ENCODE measurements at regions of chr7 and their contacts with region 1.

Region 1: DNA sequence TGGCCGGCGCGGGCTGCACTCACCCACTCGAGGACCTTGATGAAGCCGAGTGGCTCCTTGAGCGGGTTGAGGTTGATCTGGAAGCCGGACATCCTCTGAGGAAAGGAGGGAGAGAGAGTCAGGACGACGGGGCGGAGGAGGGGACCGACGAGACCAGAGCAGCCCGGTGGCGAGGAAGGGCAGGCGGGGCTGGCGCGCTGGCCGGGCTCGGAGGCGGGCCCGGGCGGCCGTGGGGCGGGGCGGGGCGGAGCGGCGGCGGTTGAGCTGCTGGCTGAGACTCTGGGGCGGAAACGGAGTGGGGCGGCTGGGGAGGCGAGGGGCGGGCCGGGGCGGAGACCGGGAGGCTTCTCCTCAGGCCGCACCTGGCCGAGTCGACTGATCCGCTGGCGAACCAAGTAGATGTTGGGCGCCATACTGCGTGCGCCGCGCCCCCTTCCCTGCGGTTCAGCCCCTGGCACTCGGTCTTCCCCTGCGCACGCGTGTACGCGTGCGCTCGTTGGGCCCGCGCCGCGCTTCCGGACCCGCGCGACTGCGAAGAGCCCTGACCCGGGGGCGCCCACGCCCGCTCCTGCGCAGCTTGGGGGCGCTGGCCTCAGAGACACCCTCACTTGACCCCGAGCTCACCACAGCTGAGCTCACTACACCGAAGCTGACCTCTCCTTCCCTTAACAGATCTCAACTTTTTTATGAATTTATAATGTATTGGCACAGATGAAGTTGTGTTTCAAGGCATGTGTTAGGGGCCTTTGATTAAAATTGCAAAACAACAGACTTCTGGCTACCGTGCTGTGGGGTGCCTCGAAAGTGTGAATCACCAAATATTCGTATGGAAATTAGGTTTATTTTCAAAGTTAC is at the start of gene SYPL1:
- DNase-seq: peak; percentile 96
- ATAC-seq: peak; percentile 87
- H3K4me3 Mint-ChIP-seq: peak within 1 kb of the TSS; percentile 89
- H3K27ac Mint-ChIP-seq: peak within 1 kb of the TSS; percentile 83
- H3K4me1 Mint-ChIP-seq: peaks cover 41% of the 10 kb centered on the region
- H3K27me3 Mint-ChIP-seq: no peaks in the 10 kb centered on the region
- total RNA-seq, gene SYPL1: 52.2 to 56.5 TPM

Region 2: DNA sequence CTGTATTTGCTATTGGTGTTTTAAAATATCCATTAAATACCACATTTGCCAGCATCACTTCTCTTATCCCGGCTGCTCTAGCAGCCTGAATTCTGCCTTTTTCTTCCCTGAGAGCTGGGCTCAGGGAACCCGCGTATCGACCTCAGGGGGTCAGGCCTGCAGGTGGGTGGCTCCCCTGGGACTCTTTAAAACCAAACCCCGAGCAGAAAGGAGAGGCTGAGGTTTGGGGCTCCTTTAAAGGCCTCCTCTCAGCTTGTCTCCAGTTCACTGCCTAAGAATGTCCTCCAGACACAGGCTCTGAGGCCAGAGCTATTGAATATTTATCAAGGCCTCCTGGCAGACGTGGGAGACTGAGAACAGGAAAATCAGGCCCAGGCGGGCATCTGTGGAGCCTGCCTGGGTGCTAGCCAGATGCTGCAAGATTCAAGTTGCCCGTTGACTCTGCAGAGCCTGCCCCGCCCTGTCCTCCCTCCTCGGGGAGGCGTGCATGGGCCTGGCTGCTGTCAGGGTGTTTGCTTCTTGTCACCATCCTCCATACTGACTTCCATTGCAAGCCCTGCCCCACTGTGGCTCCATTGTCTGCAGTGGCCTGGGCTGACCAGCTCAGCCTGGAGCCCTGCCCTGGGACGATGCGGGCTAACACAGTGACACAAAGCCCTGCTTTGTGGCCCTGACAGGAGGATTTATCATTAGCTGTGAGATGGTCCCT is 54.0 kb before region 1 on chr7:
- POLR2A ChIA-PET with region 1: interaction called, 11 read pairs
- DNase-seq: no peak
- ATAC-seq: no peak
- H3K4me3 Mint-ChIP-seq: no peak overlapping the region
- H3K27ac Mint-ChIP-seq: peak overlapping the region; percentile 20
- H3K4me1 Mint-ChIP-seq: peaks cover 38% of the 10 kb centered on the region
- H3K27me3 Mint-ChIP-seq: peaks cover 5% of the 10 kb centered on the region

Region 3: GRCh38 chr7:106071356-106071998 is 40.9 kb before region 1 on chr7:
- POLR2A ChIA-PET with region 1: interaction called, 98 read pairs
- DNase-seq: peak; percentile 73
- ATAC-seq: peak; percentile 98
- H3K4me3 Mint-ChIP-seq: peak overlapping the region; percentile 85
- H3K27ac Mint-ChIP-seq: peak overlapping the region; percentile 98
- H3K4me1 Mint-ChIP-seq: peaks cover 45% of the 10 kb centered on the region
- H3K27me3 Mint-ChIP-seq: no peaks in the 10 kb centered on the region

Region 4: DNA sequence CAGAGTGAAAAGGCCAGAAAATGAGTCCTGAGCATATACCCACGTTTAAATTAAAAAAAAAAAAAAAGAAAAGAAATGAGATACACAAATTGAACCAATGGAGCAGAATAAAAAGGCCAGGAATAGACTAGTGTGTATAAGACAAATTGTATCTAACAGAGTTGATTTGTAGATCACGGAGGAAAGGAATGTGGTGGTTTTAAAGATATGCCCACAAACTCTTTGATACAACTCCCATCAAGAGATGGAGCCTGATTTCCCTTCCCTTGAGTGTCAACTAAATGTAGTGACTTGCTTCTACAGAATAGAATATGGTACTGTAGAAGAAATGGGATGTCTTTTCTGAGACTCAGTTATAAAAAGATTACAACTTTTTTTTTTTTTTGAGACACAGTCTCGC is 10.6 kb before region 1 on chr7:
- POLR2A ChIA-PET with region 1: interaction called, 21 read pairs
- DNase-seq: no peak
- ATAC-seq: no peak
- H3K4me3 Mint-ChIP-seq: no peak overlapping the region
- H3K27ac Mint-ChIP-seq: no peak overlapping the region
- H3K4me1 Mint-ChIP-seq: peaks cover 33% of the 10 kb centered on the region
- H3K27me3 Mint-ChIP-seq: no peaks in the 10 kb centered on the region

Region 5: DNA sequence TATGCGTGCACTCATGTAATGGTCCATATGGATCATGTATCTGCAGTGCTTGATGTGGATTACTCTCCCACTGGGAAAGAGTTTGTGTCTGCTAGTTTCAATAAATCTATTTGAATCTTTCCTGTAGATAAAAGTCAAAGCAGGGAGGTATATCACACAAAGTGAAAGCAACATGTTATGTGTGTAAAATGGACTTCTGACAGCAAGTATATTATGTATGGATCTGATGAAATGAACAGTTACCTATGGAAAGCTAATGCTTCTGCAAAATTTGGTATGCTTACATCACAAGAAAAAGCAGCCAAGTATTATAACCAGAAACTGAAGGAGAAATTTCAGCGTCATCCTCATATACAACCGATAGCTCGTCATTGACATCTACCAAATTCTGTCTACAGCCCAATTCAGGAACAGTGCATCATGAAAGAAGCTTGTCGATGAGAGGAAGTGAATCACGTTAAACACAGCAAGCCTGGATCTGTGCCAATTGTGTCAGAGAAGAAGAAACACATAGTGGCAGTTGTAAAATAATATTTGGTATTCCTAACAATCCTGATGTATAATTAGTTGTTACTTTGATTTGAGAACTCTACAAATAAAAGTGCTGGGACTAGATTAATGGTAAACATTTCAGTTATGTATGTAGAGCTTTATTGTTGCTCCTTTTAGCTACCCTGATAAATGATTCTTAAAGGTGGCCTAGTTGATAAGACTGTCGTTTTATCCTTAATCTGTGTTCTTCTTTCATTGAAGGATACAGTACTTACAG is 14.0 kb after region 1 on chr7:
- POLR2A ChIA-PET with region 1: interaction called, 18 read pairs
- DNase-seq: no peak
- ATAC-seq: peak; percentile 68
- H3K4me3 Mint-ChIP-seq: peak overlapping the region; percentile 62
- H3K27ac Mint-ChIP-seq: peak overlapping the region; percentile 13
- H3K4me1 Mint-ChIP-seq: peaks cover 10% of the 10 kb centered on the region
- H3K27me3 Mint-ChIP-seq: no peaks in the 10 kb centered on the region

Region 6: GRCh38 chr7:106285051-106285854 is 172.9 kb after region 1 on chr7:
- POLR2A ChIA-PET with region 1: interaction called, 10 read pairs
- DNase-seq: peak; percentile 93
- ATAC-seq: peak; percentile 89
- H3K4me3 Mint-ChIP-seq: peak overlapping the region; percentile 99
- H3K27ac Mint-ChIP-seq: peak overlapping the region; percentile 99
- H3K4me1 Mint-ChIP-seq: peaks cover 31% of the 10 kb centered on the region
- H3K27me3 Mint-ChIP-seq: no peaks in the 10 kb centered on the region

Measured in activated naive CD8-positive, alpha-beta T cell treated with anti-CD3 and anti-CD28 coated beads, Interleukin-2, amount 10 ng/mL, durations not matched to agents 7 days and 5 days (primary cell).